GM23248 (cell line): ENCODE measurements at regions of chr10 and their contacts with region 1.

Region 1: GRCh38 chr10:123573236-123574108 is 92.7 kb upstream of the GPR26 start:
- DNase-seq: peak; percentile 36
- H3K4me3 ChIP-seq: no peak overlapping the region
- H3K27ac ChIP-seq: no peak overlapping the region
- H3K4me1 ChIP-seq: no peaks in the 10 kb centered on the region
- H3K27me3 ChIP-seq: peaks cover 13% of the 10 kb centered on the region

Region 2: DNA sequence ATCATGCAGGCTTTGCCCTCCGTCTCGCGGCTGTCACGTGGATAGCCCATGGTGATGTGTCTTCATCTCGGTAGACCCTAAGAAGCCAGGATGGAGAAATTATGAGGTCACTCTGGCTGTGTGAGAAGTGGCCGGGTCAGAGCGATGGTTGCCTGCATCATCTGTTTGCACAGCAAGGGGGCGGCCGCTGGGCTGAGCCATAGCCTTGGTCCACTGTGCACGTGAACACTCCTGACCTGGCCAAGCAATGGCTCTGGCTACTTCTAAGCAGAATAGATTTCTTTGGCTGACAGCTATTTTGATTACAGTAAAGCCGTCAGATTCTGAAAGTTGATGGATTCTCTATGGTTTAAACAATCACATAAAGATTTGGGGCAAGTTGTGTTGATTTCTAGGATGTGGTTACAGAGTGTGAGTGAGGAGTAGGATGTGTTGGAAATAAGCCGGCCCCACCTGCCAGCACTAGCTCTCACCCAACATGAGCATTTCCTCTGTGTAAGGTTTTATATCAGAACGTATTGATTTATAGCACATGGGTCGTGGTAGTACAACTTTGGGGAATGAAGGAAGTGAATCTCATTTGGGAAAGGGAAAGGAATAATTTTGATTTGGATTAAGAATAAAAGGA is 121.7 kb before region 1 on chr10:
- in situ Hi-C with region 1: no loop called
- DNase-seq: no peak
- H3K4me3 ChIP-seq: no peak overlapping the region
- H3K27ac ChIP-seq: no peak overlapping the region
- H3K4me1 ChIP-seq: no peaks in the 10 kb centered on the region
- H3K27me3 ChIP-seq: no peaks in the 10 kb centered on the region

Region 3: GRCh38 chr10:124388823-124389612 is 815.5 kb after region 1 on chr10:
- in situ Hi-C with region 1: loop called (anchors 10 kb)
- DNase-seq: peak; percentile 94
- H3K4me3 ChIP-seq: peak overlapping the region; percentile 68
- H3K27ac ChIP-seq: no peak overlapping the region
- H3K4me1 ChIP-seq: no peaks in the 10 kb centered on the region
- H3K27me3 ChIP-seq: no peaks in the 10 kb centered on the region; the same call in 1 of the 2 replicates